Thyroid gland (tissue), 4 donors: ENCODE measurements at regions of chr7 and their contacts with region 1.

Region 1: DNA sequence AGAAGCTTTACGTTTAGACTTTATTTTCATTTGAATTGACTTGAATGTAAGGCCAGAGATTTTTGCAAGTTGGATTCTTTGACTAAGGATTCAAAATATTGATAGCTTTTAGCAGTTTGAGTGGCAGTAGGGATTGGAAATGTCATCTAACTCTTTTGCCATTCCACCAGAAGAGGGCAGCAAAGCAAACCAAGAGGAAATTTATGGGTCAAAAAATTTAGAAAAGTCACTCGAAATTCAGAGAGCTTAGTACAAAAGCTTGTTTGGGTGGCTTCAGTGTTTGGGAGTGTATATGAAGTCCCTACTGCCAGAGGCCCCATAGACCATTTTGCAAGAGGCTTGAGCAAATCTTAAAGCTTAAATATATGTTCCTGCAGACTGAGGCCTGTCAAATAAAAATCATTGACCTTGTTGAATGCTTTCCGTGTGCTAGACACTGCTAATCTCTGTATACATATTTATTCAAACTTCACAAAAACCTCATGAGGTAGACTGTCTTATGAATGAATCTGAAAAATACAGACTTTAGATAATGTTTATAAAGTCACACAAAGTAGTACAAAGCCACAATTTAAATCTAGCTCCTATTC is 44.6 kb upstream of the RSBN1L start:
- DNase-seq: no peak
- H3K4me3 ChIP-seq: no peak overlapping the region
- H3K27ac ChIP-seq: peak overlapping the region in 1 of 3 donors; percentile 40
- H3K4me1 ChIP-seq: peaks cover 16 to 21% of the 10 kb centered on the region in 2 donors
- H3K27me3 ChIP-seq: no peaks in the 10 kb centered on the region
- CTCF ChIP-seq: peak; percentile 58 to 81 (median 66)
- POLR2A ChIP-seq: no peak

Region 2: GRCh38 chr7:77759294-77759889 is 107.7 kb after region 1 on chr7:
- intact Hi-C with region 1: loop called (anchors 5 kb)
- DNase-seq: peak; percentile 64 to 65
- H3K4me3 ChIP-seq: no peak overlapping the region
- H3K27ac ChIP-seq: peak overlapping the region; percentile 48 to 78 (median 60)
- H3K4me1 ChIP-seq: peaks cover 10 to 31% of the 10 kb centered on the region in 2 donors
- H3K27me3 ChIP-seq: no peaks in the 10 kb centered on the region
- CTCF ChIP-seq: peak; percentile 52 to 89 (median 77)
- POLR2A ChIP-seq: no peak

Region 3: DNA sequence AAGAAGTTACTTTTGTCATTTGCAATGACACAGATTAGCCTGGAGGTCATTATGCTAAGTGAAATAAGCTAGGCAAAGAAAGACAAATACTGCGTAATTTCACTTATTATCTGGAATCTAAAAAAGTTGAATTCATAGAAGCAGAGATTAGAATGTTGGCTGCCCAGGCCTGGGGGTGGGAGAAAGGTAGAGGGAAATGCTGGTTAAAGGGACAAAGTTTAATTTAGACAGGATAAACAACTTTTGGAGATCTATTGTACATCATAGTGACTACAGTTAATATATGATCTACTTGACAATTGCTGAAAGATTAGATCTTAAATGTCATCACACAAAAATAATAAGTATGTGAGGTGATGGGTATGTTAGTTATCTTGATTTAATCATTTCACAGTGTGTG is 1887.5 kb after region 1 on chr7:
- intact Hi-C with region 1: no loop called
- DNase-seq: no peak
- H3K4me3 ChIP-seq: no peak overlapping the region
- H3K27ac ChIP-seq: no peak overlapping the region
- H3K4me1 ChIP-seq: no peaks in the 10 kb centered on the region
- H3K27me3 ChIP-seq: no peaks in the 10 kb centered on the region
- CTCF ChIP-seq: no peak
- POLR2A ChIP-seq: no peak